Esophagus muscularis mucosa (tissue), 4 donors: ENCODE measurements at regions of chr3 and their contacts with region 1.

Region 1: GRCh38 chr3:57852896-57853295 is 96.8 kb downstream of the SLMAP start:
- DNase-seq: no peak
- H3K4me3 ChIP-seq: no peak overlapping the region
- H3K27ac ChIP-seq: no peak overlapping the region
- H3K4me1 ChIP-seq: peaks cover 0 to 10% (median 7%) of the 10 kb centered on the region in 4 donors
- H3K27me3 ChIP-seq: no peaks in the 10 kb centered on the region
- CTCF ChIP-seq: peak; percentile 20 to 34 (median 29)
- EP300 ChIP-seq: no peak
- POLR2A ChIP-seq: no peak

Region 2: GRCh38 chr3:57397175-57398026 is 455.5 kb before region 1 on chr3:
- intact Hi-C with region 1: loop called (anchors 5 kb)
- DNase-seq: no peak
- H3K4me3 ChIP-seq: no peak overlapping the region
- H3K27ac ChIP-seq: no peak overlapping the region
- H3K4me1 ChIP-seq: no peaks in the 10 kb centered on the region
- H3K27me3 ChIP-seq: peaks cover 0 to 8% (median 0%) of the 10 kb centered on the region in 4 donors
- CTCF ChIP-seq: peak; percentile 67 to 88 (median 68)
- EP300 ChIP-seq: no peak
- POLR2A ChIP-seq: no peak